Naive thymus-derived CD4-positive, alpha-beta T cell (primary cell): ENCODE measurements at regions of chr2 and their contacts with region 1.

Region 1: DNA sequence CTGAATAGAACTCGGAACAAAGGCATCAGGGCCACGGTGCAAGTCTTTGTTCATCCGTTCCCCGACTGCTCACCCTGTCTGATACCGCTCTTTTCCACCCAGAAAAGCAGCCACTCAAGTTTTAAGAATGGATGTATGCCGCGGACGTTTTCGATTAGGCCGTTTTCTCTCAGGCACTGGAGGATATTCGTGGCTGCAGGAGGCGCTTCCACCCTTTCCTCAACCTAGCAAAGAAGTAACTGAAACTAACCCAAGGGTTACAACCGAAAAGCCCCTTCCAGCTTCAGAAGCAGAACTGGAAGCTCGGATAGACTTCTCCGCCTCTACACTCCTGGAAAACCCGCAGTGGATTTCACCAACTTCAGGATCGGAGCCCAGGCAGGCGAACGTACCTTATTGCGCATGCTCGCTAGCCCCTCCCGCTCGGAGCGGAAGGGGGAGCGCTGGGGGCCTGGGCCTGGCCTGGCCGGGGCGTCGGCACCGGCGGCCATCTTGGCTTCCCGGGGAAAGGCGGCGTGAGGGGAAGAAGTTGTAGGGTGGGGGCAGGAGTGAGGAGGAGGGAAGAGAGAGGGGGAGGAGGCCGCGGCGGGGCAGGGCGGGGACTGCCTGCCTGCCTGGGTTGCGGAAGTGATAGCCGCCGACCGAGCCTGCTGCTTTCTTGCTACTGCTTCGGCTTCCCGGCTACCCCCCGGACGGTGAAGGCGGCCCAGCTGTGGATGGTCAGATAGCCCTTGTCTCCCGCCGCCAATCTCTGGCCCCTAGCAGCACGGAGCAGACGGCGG is at the start of gene ACTR3:
- DNase-seq: peak; percentile 93 to 99 (median 98)
- ATAC-seq: peak; percentile 94
- H3K4me3 ChIP-seq: peak within 1 kb of the TSS; percentile 89
- H3K4me3 Mint-ChIP-seq: peak within 1 kb of the TSS; percentile 88 to 100 (median 98)
- H3K27ac ChIP-seq: peak within 1 kb of the TSS; percentile 98
- H3K27ac Mint-ChIP-seq: peak within 1 kb of the TSS; percentile 90 to 99 (median 98)
- H3K4me1 ChIP-seq: peaks cover 45 to 68% of the 10 kb centered on the region in 2 donors
- H3K4me1 Mint-ChIP-seq: peaks cover 59 to 84% (median 81%) of the 10 kb centered on the region in 7 donors
- H3K27me3 ChIP-seq: no peaks in the 10 kb centered on the region
- H3K27me3 Mint-ChIP-seq: no peaks in the 10 kb centered on the region
- total RNA-seq, gene ACTR3: 172 to 612 (median 213) TPM

Region 2: DNA sequence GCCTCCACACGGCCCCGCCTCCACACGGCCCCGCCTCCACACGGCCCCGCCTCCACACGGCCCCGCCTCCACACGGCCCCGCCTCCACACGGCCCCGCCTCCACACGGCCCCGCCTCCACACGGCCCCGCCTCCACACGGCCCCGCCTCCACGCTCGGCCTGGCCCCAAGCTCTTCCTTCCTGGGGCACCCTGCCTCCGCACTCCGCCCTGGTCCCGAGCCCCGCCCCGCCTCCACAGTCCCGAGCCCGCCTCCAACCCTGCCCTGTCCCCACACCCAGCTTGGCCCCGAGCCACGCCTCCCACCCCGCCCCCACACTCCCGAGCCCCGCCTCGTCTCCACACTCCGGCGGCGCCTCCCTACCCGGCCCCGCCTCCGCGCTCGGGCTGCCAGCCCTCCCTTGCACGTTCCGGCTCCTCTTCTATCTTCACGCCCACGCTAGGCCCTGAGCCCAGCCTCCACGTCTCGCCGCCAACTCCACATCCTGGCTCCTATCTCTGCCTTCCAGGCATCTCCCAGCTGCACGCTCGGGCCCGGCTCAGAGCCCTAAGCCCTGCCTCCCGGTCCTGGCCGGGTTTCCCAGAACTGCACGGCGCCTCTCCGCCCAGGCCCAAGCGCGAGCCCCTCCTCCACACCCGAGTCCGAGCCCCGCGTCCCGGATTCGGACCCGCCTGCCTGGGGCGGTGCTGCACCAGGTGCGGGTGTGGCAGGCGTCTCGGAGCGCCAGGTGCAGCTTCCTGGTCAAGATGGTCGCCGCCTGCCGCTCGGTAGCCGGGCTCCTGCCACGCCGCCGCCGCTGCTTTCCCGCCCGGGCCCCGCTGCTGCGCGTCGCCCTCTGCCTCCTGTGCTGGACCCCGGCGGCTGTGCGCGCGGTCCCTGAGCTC is 1834.6 kb before region 1 on chr2 and contains the start of gene TMEM87B:
- CTCF ChIA-PET with region 1: no interaction called
- POLR2A ChIA-PET with region 1: no interaction called
- intact Hi-C with region 1: loop called in 1 of 2 experiments (anchors 2 kb)
- DNase-seq: peak; percentile 90 to 98 (median 96)
- ATAC-seq: peak; percentile 80
- H3K4me3 ChIP-seq: peak within 1 kb of the TSS; percentile 85
- H3K4me3 Mint-ChIP-seq: peak within 1 kb of the TSS; percentile 80 to 100 (median 95)
- H3K27ac ChIP-seq: peak within 1 kb of the TSS; percentile 82
- H3K27ac Mint-ChIP-seq: peak within 1 kb of the TSS; percentile 92 to 100 (median 98)
- H3K4me1 ChIP-seq: peaks cover 16 to 19% of the 10 kb centered on the region in 2 donors
- H3K4me1 Mint-ChIP-seq: peaks cover 33 to 48% (median 42%) of the 10 kb centered on the region in 7 donors
- H3K27me3 ChIP-seq: no peaks in the 10 kb centered on the region
- H3K27me3 Mint-ChIP-seq: peaks cover 0 to 2% (median 0%) of the 10 kb centered on the region in 5 donors
- total RNA-seq, gene TMEM87B: 14.0 to 26.9 (median 17.4) TPM

Region 3: GRCh38 chr2:113173542-113174395 is 715.9 kb before region 1 on chr2 and contains the start of gene PSD4:
- CTCF ChIA-PET with region 1: no interaction called
- POLR2A ChIA-PET with region 1: no interaction called
- intact Hi-C with region 1: loop called in 1 of 2 experiments (anchors 10 kb)
- DNase-seq: peak; percentile 61 to 92 (median 90)
- ATAC-seq: peak; percentile 88
- H3K4me3 ChIP-seq: peak within 1 kb of the TSS; percentile 80
- H3K4me3 Mint-ChIP-seq: peak within 1 kb of the TSS; percentile 87 to 99 (median 94)
- H3K27ac ChIP-seq: peak within 1 kb of the TSS; percentile 92
- H3K27ac Mint-ChIP-seq: peak within 1 kb of the TSS; percentile 89 to 98 (median 93)
- H3K4me1 ChIP-seq: peaks cover 67 to 68% of the 10 kb centered on the region in 2 donors
- H3K4me1 Mint-ChIP-seq: peaks cover 58 to 84% (median 72%) of the 10 kb centered on the region in 7 donors
- H3K27me3 ChIP-seq: no peaks in the 10 kb centered on the region
- H3K27me3 Mint-ChIP-seq: peaks cover 0 to 5% (median 0%) of the 10 kb centered on the region in 5 donors
- total RNA-seq, gene PSD4: 96.4 to 399 (median 167) TPM

Region 4: DNA sequence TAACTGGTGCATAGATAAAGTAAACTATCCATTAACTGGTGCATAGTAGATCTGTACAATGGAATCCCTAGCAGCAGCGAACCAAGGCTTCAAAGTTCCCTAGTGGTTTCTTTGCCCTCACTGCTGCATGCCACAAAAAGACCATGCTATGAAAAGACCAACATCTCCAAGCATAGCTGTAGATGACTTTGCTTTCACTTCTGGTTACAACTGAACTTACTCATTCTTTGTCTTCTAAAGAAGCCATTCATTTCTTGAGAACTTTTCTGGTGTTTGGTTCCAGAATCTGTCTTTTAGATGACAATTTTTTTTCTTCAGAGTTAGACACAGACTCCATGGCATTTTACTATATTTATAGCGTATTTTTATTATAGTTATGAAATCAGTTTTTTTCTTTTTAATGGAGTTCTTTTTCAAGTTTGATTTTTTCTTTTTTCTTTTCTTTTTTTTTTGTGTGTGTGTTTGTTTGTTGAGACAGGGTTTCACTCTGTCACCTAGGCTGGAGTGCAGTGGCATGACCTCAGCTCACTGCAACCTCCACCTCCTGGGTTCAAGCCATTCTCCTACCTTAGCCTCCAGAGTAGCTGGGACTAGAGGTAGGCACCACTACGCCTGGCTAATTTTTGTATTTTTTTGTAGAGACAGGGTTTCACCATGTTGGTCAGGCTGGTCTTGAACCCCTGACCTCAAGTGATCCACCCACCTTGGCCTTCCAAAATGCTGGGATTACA is 196.8 kb before region 1 on chr2:
- CTCF ChIA-PET with region 1: no interaction called
- POLR2A ChIA-PET with region 1: no interaction called
- intact Hi-C with region 1: loop called in 1 of 2 experiments (anchors 2 kb)
- DNase-seq: peak in 5 of 9 donors; percentile 6 to 44 (median 30)
- ATAC-seq: peak; percentile 71
- H3K4me3 ChIP-seq: no peak overlapping the region
- H3K4me3 Mint-ChIP-seq: peak overlapping the region; percentile 73 to 90 (median 81)
- H3K27ac ChIP-seq: no peak overlapping the region
- H3K27ac Mint-ChIP-seq: peak overlapping the region; percentile 40 to 93 (median 87)
- H3K4me1 ChIP-seq: peaks cover 13 to 20% of the 10 kb centered on the region in 2 donors
- H3K4me1 Mint-ChIP-seq: peaks cover 16 to 35% (median 27%) of the 10 kb centered on the region in 7 donors
- H3K27me3 ChIP-seq: no peaks in the 10 kb centered on the region
- H3K27me3 Mint-ChIP-seq: peaks cover 0 to 9% (median 0%) of the 10 kb centered on the region in 5 donors

Region 5: DNA sequence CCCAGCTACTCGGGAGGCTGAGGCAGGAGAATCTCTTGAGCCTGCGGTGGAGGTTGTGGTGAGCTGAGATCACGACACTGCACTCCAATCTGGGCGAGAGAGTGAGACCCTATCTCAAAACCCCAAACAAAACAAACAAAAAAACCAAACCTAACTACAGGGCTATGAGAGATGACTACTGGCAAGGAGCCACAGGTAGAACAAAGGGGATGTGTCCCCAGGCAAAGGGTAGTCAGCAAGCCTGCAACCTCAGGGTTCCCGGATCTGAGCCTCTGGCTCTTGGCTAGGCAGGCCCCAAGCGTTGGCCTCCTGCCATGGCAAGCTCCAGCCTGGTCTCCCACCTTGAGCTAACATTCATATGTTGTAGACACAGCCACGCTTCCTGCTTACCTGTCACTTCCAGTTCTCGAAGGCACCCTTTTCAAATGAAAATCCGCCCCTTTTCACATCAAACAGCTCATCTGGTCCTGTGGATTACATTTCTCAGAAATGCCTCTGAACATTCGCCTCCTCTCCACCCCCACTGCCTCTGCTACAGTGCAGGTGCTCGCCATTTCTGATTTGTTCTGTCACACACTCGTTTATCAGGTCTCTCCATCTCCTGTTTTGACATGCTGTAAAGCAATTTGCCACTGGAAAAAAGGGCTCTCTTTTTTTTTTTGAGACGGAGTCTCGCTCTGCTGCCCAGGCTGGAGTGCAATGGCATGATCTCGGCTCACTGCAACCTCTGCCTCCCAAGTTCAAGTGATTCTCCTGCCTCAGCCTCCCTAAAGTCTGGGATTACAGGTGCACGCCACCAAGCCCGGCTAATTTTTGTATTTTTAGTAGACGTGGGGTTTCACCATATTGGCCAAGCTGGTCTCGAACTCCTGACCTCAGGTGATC is 12.9 kb before region 1 on chr2:
- CTCF ChIA-PET with region 1: interaction called, 7 read pairs
- POLR2A ChIA-PET with region 1: interaction called, 7 read pairs
- intact Hi-C with region 1: loop called (anchors 1 kb)
- DNase-seq: peak; percentile 31 to 93 (median 85)
- ATAC-seq: peak; percentile 90
- H3K4me3 ChIP-seq: no peak overlapping the region
- H3K4me3 Mint-ChIP-seq: peak overlapping the region; percentile 55 to 84 (median 72)
- H3K27ac ChIP-seq: peak overlapping the region; percentile 73
- H3K27ac Mint-ChIP-seq: peak overlapping the region; percentile 83 to 96 (median 92)
- H3K4me1 ChIP-seq: peaks cover 4 to 23% of the 10 kb centered on the region in 2 donors
- H3K4me1 Mint-ChIP-seq: peaks cover 38 to 69% (median 64%) of the 10 kb centered on the region in 7 donors
- H3K27me3 ChIP-seq: no peaks in the 10 kb centered on the region
- H3K27me3 Mint-ChIP-seq: no peaks in the 10 kb centered on the region

Region 6: DNA sequence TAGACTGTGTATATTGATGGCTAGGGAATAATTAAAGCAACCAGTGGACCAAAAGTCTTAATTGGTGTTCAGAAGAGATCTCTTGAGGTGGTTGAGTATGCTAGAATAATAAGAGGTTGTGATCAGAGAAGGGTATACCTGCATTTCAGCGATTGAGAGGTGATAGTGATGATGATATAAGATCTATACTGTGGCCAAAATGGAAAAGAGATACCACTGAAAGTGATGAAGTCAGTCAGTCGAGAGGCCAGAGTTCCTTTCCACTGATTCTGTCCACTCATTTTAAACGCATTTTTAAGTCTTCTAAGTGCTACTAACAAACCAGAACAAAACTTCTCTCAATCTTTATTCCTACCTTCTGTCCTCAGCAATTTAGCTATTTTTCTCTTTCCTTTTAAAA is 33.1 kb after region 1 on chr2:
- CTCF ChIA-PET with region 1: no interaction called
- POLR2A ChIA-PET with region 1: no interaction called
- intact Hi-C with region 1: loop called (anchors 2 to 5 kb)
- DNase-seq: no peak
- ATAC-seq: no peak
- H3K4me3 ChIP-seq: no peak overlapping the region
- H3K4me3 Mint-ChIP-seq: no peak overlapping the region
- H3K27ac ChIP-seq: no peak overlapping the region
- H3K27ac Mint-ChIP-seq: no peak overlapping the region
- H3K4me1 ChIP-seq: peaks cover 0 to 8% of the 10 kb centered on the region in 2 donors
- H3K4me1 Mint-ChIP-seq: peaks cover 17 to 36% (median 29%) of the 10 kb centered on the region in 7 donors
- H3K27me3 ChIP-seq: no peaks in the 10 kb centered on the region
- H3K27me3 Mint-ChIP-seq: no peaks in the 10 kb centered on the region